Kidney (tissue), 22 donors: ENCODE measurements at regions of chr1 and their contacts with region 1.

Region 1: DNA sequence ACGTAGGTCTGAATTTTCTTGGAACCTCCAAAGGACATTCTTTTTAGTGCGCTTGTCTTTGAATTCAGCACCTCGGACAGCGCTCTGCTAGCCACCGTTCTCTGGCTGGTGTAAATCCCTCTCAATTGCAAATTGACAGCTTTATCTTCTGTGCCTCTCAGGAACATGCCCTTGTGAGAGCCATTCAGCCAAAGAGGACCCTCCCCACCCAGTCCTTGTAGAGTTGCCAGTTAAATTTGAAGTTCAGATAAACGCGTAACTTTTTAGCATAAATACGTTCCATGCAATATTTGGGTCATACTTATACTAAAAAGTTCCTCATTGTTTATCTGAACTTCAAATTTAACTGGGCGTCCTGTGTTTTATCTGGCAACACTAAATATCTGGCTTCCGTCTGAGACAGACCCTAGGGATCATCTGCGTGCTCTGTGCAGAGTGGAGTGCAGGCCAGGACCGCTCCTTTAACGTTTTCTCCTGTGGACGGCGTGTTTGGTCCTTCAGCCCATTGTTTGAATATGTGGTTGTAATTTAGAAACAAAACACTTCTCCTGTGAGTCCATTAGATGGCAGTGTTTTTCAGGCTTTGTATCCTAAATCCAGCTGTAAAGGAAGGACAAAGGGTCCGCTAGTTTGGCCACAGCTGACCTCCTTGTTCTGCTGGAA is 7.0 kb downstream of the KCNAB2 start:
- DNase-seq: peak in 4 of 5 donors; percentile 81 to 93 (median 89)
- H3K4me3 ChIP-seq: no peak overlapping the region
- H3K27ac ChIP-seq: no peak overlapping the region
- H3K4me1 ChIP-seq: peaks cover 0 to 5% (median 4%) of the 10 kb centered on the region in 3 donors
- H3K27me3 ChIP-seq: no peaks in the 10 kb centered on the region
- CTCF ChIP-seq: peak; percentile 34

Region 2: DNA sequence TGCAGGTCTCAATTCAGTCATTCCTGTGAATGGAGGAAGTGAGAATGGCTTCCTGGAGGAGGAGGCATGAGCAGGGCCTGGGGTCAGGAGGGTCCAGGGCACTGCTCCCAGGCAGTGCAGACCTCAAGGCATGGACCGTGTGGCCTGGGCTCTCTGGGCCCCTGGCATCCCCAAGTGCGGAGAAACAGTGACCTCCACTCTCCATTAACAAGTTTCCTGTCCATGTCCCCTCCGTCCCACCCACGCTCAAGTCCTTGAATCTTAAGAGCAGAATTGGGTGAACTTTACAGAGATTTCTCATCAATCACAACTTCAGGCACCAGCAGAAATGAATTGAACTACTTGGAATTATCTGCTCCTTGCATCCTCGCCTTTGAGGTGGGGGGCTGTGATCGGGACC is 271.6 kb before region 1 on chr1:
- intact Hi-C with region 1: no loop called
- DNase-seq: no peak
- H3K4me3 ChIP-seq: no peak overlapping the region
- H3K27ac ChIP-seq: no peak overlapping the region
- H3K4me1 ChIP-seq: no peaks in the 10 kb centered on the region
- H3K27me3 ChIP-seq: no peaks in the 10 kb centered on the region
- CTCF ChIP-seq: no peak

Region 3: DNA sequence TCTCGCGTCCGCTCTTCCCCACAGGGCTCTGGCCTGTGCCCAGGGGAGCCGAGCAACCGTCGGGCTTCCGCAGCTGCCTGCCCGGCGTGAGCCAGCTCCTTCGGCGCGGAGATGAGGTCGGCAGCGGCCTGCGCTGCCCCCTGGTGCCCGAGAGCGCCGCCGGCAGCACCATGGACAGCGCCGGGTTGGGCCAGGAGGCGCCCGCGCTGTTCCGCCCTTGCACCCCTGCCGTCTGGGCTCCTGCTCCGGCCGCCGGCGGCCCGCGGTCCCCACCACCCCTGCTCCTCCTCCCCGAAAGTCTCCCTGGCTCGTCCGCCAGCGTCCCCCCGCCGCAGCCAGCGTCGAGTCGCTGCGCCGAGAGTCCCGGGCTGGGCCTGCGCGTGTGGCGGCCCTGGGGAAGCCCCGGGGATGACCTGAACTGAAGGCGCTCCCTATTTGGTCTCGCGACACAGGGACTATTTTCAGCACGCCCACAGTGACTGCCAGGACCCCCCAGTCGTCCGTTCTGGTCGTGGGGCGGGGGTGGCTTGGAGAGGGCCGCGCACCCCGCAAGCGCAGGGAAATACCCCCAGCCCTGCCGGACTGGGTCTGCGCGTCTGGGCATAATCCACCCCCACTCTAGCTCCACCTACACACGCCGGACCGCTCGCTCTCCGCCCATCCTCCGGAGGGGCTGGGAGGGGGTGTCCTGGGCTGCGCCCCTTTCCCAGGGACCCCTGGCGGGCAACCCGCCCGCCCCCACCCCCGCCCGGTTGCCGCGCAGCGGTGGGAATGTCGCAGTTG is 192.6 kb after region 1 on chr1:
- intact Hi-C with region 1: loop called (anchors 10 kb)
- DNase-seq: peak; percentile 90 to 93 (median 92)
- H3K4me3 ChIP-seq: no peak overlapping the region
- H3K27ac ChIP-seq: no peak overlapping the region
- H3K4me1 ChIP-seq: peaks cover 0 to 4% (median 0%) of the 10 kb centered on the region in 3 donors
- H3K27me3 ChIP-seq: peaks cover 31% of the 10 kb centered on the region
- CTCF ChIP-seq: peak; percentile 96